ENCODE measurements at regions of chr17 and their contacts with region 1.

Region 1: DNA sequence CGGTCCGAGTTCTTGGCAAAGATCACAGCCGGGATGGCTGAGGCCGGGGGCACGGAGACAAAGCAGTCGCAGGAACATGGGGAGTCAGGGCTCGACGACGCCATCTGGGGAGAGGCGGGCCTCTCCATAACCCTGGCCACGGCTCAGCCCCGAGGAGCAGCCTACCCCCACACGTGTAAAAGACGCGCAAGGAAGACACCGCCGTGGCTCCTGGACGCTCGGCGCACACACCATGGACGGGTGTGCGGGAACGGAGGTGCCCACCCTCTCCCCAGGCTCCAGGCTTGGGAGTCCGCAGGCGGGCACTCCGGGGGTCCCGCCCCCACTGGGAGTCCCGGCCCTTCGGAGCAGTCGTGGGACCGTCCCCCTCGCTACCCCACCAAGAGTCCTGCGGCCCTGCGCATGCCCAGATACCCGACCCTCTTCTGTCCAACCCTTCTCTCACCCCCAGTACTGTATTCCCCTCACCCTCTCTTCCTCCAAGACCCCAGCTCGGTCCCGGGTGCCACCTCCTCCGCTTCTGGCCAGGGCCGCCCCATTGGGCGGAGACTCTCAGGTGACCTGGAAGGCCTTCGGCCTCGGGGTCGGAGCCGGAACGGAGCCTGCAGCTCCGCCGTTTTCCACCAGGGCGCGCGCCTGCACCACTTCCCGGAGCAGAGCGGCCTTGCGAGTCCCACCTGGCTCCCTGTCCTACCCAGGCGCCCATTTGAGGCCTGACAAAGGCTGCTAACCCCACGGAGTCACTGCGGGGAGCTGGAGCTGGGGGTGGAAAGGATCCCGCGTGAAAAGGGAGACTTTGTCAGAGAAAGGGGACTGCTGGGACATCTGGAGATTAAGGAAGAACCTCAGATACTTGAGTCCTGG is at the start of gene SCRN2:
- DNase-seq: peak; percentile 89 to 96 (median 91)
- ATAC-seq: peak; percentile 81 to 95 (median 92)
- H3K4me3 ChIP-seq: peak within 1 kb of the TSS; percentile 57 to 96 (median 90)
- H3K27ac ChIP-seq: peak within 1 kb of the TSS in 11 of 12 donors; percentile 55 to 84 (median 75)
- H3K4me1 ChIP-seq: peaks cover 4 to 28% (median 19%) of the 10 kb centered on the region in 12 donors
- H3K27me3 ChIP-seq: peaks cover 0 to 25% (median 8%) of the 10 kb centered on the region in 9 donors
- CTCF ChIP-seq: peak; percentile 93 to 99 (median 98)
- POLR2A ChIP-seq: no peak
- total RNA-seq, gene SCRN2: 29.4 to 42.9 (median 33.9) TPM

Region 2: GRCh38 chr17:47889734-47890529 is 49.0 kb after region 1 on chr17:
- intact Hi-C with region 1: loop called (anchors 1 to 2 kb)
- DNase-seq: peak; percentile 84 to 92 (median 87)
- ATAC-seq: peak; percentile 74 to 93 (median 92)
- H3K4me3 ChIP-seq: no peak overlapping the region
- H3K27ac ChIP-seq: no peak overlapping the region
- H3K4me1 ChIP-seq: peaks cover 0 to 16% (median 8%) of the 10 kb centered on the region in 12 donors
- H3K27me3 ChIP-seq: no peaks in the 10 kb centered on the region
- CTCF ChIP-seq: peak; percentile 89 to 99 (median 96)
- POLR2A ChIP-seq: no peak

Region 3: GRCh38 chr17:47941236-47941994 is 100.4 kb after region 1 on chr17 and contains the start of gene PNPO:
- intact Hi-C with region 1: loop called in 8 of 10 experiments (anchors 5 to 10 kb)
- DNase-seq: peak; percentile 92 to 96 (median 95)
- ATAC-seq: peak; percentile 98 to 99 (median 98)
- H3K4me3 ChIP-seq: peak within 1 kb of the TSS; percentile 64 to 98 (median 84)
- H3K27ac ChIP-seq: peak within 1 kb of the TSS in 11 of 12 donors; percentile 65 to 92 (median 82)
- H3K4me1 ChIP-seq: peaks cover 0 to 45% (median 17%) of the 10 kb centered on the region in 12 donors
- H3K27me3 ChIP-seq: no peaks in the 10 kb centered on the region
- CTCF ChIP-seq: peak in 2 of 12 donors; percentile 5 to 11
- POLR2A ChIP-seq: peak in 1 of 2 donors; percentile 68
- total RNA-seq, gene PNPO: 24.2 to 45.0 (median 36.1) TPM

Region 4: GRCh38 chr17:47970704-47971463 is 129.9 kb after region 1 on chr17 and contains the start of gene CDK5RAP3:
- intact Hi-C with region 1: loop called (anchors 1 to 10 kb)
- DNase-seq: peak; percentile 100
- ATAC-seq: peak; percentile 99 to 100 (median 100)
- H3K4me3 ChIP-seq: peak within 1 kb of the TSS; percentile 80 to 98 (median 90)
- H3K27ac ChIP-seq: peak within 1 kb of the TSS in 11 of 12 donors; percentile 31 to 90 (median 79)
- H3K4me1 ChIP-seq: peaks cover 0 to 24% (median 14%) of the 10 kb centered on the region in 12 donors
- H3K27me3 ChIP-seq: no peaks in the 10 kb centered on the region
- CTCF ChIP-seq: peak; percentile 95 to 99 (median 98)
- POLR2A ChIP-seq: peak in 1 of 2 donors; percentile 65
- total RNA-seq, gene CDK5RAP3: 41.2 to 80.9 (median 53.6) TPM

Region 5: DNA sequence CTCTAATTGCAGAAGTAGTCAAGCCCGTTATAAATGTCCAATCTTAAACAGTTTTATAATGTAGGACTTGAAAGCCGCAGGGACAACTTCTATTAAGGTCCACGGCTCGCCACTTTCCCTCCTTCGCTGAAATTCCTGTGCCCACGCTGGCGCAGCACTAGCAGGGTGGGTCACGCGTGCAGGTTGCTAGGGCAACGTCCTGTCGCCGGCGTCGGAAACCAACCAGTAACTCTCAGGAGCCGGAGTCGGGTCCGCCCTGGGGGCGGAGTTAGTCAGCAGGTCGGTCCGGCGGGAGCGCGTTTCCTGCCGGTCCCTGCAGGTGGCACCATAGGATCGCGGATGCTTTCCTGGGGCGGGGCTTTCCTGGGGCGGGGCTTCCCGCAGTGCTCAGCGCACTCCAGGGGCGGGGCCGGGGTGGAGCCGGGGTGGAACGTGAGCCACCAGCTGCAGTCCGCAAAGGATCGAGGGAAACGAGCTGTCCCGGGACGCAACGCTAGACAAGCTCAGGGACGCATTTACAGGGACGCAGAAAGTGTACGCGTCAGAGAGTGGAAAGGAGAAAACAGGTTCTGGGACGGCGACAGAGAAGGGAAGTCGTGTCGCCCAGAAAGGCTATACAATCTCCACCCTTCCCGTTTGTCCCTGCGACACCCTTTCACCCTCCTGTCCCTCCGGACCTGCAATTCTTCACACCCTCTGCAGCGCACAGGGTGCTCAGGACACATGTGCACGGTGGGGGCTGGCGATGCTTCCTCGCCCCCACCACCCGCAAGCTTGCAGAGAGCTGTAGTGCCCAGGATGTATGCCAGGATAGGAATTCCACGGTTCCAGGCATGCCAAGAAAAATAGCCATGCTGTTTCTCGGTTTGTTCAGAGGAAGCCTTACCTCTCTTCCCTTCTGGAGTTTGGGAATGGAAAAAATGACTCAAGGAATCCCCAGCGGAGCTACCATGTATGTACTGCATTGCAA is 184.2 kb after region 1 on chr17:
- intact Hi-C with region 1: loop called in 1 of 10 experiments (anchors 5 kb)
- DNase-seq: peak; percentile 97 to 99 (median 97)
- ATAC-seq: peak; percentile 88 to 92 (median 89)
- H3K4me3 ChIP-seq: peak overlapping the region; percentile 22 to 69 (median 53)
- H3K27ac ChIP-seq: peak overlapping the region; percentile 7 to 90 (median 80)
- H3K4me1 ChIP-seq: peaks cover 6 to 43% (median 38%) of the 10 kb centered on the region in 12 donors
- H3K27me3 ChIP-seq: peaks cover 0 to 27% (median 0%) of the 10 kb centered on the region in 9 donors
- CTCF ChIP-seq: peak; percentile 63 to 99 (median 76)
- POLR2A ChIP-seq: peak in 1 of 2 donors; percentile 40

Region 6: GRCh38 chr17:48429638-48430586 is 588.9 kb after region 1 on chr17 and contains the start of gene SKAP1:
- intact Hi-C with region 1: no loop called
- DNase-seq: peak in 1 of 5 donors; percentile 62
- ATAC-seq: no peak
- H3K4me3 ChIP-seq: peak within 1 kb of the TSS in 4 of 12 donors; percentile 12 to 59 (median 24)
- H3K27ac ChIP-seq: peak within 1 kb of the TSS in 2 of 12 donors; percentile 4 to 81
- H3K4me1 ChIP-seq: peaks cover 0 to 5% (median 0%) of the 10 kb centered on the region in 12 donors
- H3K27me3 ChIP-seq: peaks cover 17 to 92% (median 61%) of the 10 kb centered on the region in 9 donors
- CTCF ChIP-seq: no peak
- POLR2A ChIP-seq: no peak
- total RNA-seq, gene SKAP1: 0.31 to 5.3 (median 1.2) TPM in 3 of 9 donors, not detected in the others